ENCODE measurements at regions of chr1 and their contacts with region 1.

Region 1: GRCh38 chr1:10032590-10033358 is at the start of gene UBE4B:
- DNase-seq: peak; percentile 95 to 99 (median 98)

Region 2: GRCh38 chr1:9960706-9961562 is 71.8 kb before region 1 on chr1:
- intact Hi-C with region 1: no loop called
- DNase-seq: no peak

Region 3: DNA sequence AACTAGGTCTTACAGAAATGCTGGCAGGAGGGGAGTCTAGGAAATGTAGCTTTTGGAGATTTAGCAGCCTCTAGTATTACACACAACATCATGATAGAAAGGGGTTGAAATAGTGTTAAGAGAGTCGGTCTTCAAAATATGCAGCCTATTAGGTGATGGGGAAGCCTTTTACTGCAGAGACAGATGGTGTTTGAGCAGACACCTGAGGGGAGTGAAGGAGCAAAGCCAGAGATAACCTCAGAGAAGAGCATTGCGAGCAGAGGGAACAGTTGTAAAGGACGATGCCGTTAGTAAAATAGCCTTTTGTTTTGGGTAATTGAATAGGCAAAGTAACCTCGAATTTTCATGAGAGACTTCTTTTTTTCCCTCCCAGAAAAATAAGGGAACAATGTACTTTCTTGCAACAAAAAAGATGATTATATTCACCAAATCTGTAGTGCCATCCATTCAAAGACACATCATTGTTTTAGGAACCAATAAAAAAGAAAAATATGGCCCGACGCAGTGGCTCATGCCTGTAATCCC is 111.2 kb after region 1 on chr1:
- intact Hi-C with region 1: loop called (anchors 10 kb)
- DNase-seq: peak in 2 of 42 donors; percentile 26 to 46

Region 4: GRCh38 chr1:10271869-10272268 is 239.1 kb after region 1 on chr1:
- intact Hi-C with region 1: no loop called
- DNase-seq: no peak

Measured in head of caudate nucleus (tissue), 42 donors.